CD4-positive, alpha-beta T cell (primary cell): ENCODE measurements at regions of chr15 and their contacts with region 1.

Region 1: GRCh38 chr15:68875377-68876116 is 54.8 kb upstream of the SPESP1 start:
- DNase-seq: peak; percentile 86 to 97 (median 92)
- ATAC-seq: peak; percentile 84
- H3K4me3 ChIP-seq: no peak overlapping the region
- H3K4me3 Mint-ChIP-seq: no peak overlapping the region
- H3K27ac ChIP-seq: no peak overlapping the region
- H3K27ac Mint-ChIP-seq: no peak overlapping the region
- H3K4me1 ChIP-seq: peaks cover 6% of the 10 kb centered on the region
- H3K4me1 Mint-ChIP-seq: no peaks in the 10 kb centered on the region
- H3K27me3 ChIP-seq: peaks cover 12 to 17% of the 10 kb centered on the region in 2 experiments
- H3K27me3 Mint-ChIP-seq: peaks cover 37% of the 10 kb centered on the region
- CTCF ChIP-seq: peak; percentile 87

Region 2: DNA sequence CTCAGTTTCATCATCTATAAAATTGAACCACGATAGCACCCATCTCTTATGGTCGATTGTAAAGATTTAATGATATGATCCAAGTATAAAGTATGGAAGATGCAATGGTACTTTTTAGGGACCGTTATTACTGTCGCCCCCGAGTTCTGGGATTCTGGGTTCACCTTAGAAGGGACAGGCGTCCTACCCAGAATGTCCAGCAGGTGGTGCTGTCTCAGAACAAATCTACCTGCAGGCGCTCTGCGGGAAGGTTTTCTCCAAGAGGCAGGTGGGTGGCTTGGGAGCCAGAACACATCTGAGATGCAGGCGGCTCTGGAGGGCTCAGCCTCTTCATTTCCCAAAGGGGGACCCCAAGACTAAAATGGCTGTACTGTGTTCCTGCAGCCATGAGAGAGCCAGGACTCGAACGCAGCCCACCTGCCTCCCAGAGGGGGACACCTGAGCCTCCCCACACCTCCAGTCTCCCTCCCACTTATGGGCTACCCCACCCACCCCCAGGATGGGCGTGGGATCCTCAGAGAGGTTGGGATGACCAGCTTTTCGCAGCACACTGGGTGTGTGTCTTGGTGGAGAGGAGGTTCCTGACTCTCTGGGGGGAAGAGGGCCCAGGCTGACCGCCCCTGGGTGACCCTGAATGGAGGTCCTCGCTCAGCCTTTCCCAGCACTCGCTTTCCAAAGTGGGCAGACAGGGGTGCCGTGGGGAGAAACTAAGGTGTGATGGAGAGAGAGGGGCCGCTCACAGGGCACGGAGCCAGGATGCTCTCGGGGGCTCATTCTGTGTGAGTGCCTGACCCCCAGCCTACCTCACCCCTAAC is 324.9 kb before region 1 on chr15:
- CTCF ChIA-PET with region 1: no interaction called
- POLR2A ChIA-PET with region 1: no interaction called
- intact Hi-C with region 1: loop called in 1 of 2 experiments (anchors 2 kb)
- DNase-seq: peak; percentile 58 to 82 (median 69)
- ATAC-seq: no peak
- H3K4me3 ChIP-seq: no peak overlapping the region
- H3K4me3 Mint-ChIP-seq: no peak overlapping the region
- H3K27ac ChIP-seq: no peak overlapping the region
- H3K27ac Mint-ChIP-seq: no peak overlapping the region
- H3K4me1 ChIP-seq: no peaks in the 10 kb centered on the region
- H3K4me1 Mint-ChIP-seq: no peaks in the 10 kb centered on the region
- H3K27me3 ChIP-seq: peaks cover 11 to 15% of the 10 kb centered on the region in 2 experiments
- H3K27me3 Mint-ChIP-seq: peaks cover 54% of the 10 kb centered on the region
- CTCF ChIP-seq: peak; percentile 94

Region 3: DNA sequence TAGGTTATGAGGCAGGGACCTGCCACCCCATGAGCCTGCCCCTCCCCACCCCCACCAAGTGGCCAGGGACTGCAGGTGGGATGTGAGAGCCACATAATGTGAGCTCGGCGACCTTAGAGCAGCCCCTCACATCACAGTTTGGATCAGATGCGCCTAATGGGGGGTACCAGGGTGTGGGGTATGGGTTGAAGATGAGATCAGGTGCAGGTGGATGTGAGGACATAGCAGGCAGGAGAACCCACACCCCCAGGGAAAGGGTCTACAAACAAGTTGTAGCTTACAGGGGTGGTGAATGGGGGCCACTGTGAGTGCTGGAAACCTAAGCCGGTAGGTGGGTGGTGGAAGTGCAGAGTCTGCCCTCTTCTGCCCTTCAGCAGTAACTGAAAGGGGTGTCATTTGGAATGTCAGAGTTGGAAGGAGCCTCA is 202.8 kb before region 1 on chr15:
- CTCF ChIA-PET with region 1: interaction called, 4 read pairs
- POLR2A ChIA-PET with region 1: no interaction called
- intact Hi-C with region 1: loop called in 1 of 2 experiments (anchors 5 kb)
- DNase-seq: no peak
- ATAC-seq: no peak
- H3K4me3 ChIP-seq: no peak overlapping the region
- H3K4me3 Mint-ChIP-seq: no peak overlapping the region
- H3K27ac ChIP-seq: no peak overlapping the region
- H3K27ac Mint-ChIP-seq: no peak overlapping the region
- H3K4me1 ChIP-seq: peaks cover 2% of the 10 kb centered on the region
- H3K4me1 Mint-ChIP-seq: no peaks in the 10 kb centered on the region
- H3K27me3 ChIP-seq: peaks cover 0 to 13% of the 10 kb centered on the region in 2 experiments
- H3K27me3 Mint-ChIP-seq: peaks cover 16% of the 10 kb centered on the region
- CTCF ChIP-seq: no peak

Region 4: GRCh38 chr15:68783226-68784058 is 92.1 kb before region 1 on chr15:
- CTCF ChIA-PET with region 1: interaction called, 54 read pairs
- POLR2A ChIA-PET with region 1: interaction called, 6 read pairs
- intact Hi-C with region 1: loop called (anchors 1 kb)
- DNase-seq: peak; percentile 56 to 84 (median 66)
- ATAC-seq: peak; percentile 89
- H3K4me3 ChIP-seq: no peak overlapping the region
- H3K4me3 Mint-ChIP-seq: no peak overlapping the region
- H3K27ac ChIP-seq: no peak overlapping the region
- H3K27ac Mint-ChIP-seq: peak overlapping the region; percentile 76
- H3K4me1 ChIP-seq: peaks cover 36% of the 10 kb centered on the region
- H3K4me1 Mint-ChIP-seq: peaks cover 30% of the 10 kb centered on the region
- H3K27me3 ChIP-seq: no peaks in the 10 kb centered on the region
- H3K27me3 Mint-ChIP-seq: no peaks in the 10 kb centered on the region
- CTCF ChIP-seq: peak; percentile 70

Region 5: GRCh38 chr15:68829068-68829467 is 46.5 kb before region 1 on chr15:
- CTCF ChIA-PET with region 1: interaction called, 13 read pairs
- POLR2A ChIA-PET with region 1: interaction called, 4 read pairs
- intact Hi-C with region 1: loop called in 1 of 2 experiments (anchors 5 kb)
- DNase-seq: peak in 4 of 14 experiments; percentile 31 to 67 (median 56)
- ATAC-seq: peak; percentile 64
- H3K4me3 ChIP-seq: no peak overlapping the region
- H3K4me3 Mint-ChIP-seq: no peak overlapping the region
- H3K27ac ChIP-seq: no peak overlapping the region
- H3K27ac Mint-ChIP-seq: no peak overlapping the region
- H3K4me1 ChIP-seq: peaks cover 6% of the 10 kb centered on the region
- H3K4me1 Mint-ChIP-seq: peaks cover 19% of the 10 kb centered on the region
- H3K27me3 ChIP-seq: no peaks in the 10 kb centered on the region
- H3K27me3 Mint-ChIP-seq: no peaks in the 10 kb centered on the region
- CTCF ChIP-seq: peak; percentile 61